ENCODE measurements at regions of chr3 and their contacts with region 1.

Region 1: GRCh38 chr3:158570999-158571974 is at the start of gene MLF1:
- DNase-seq: peak; percentile 98
- H3K4me3 ChIP-seq: peak within 1 kb of the TSS; percentile 83 to 90
- H3K27ac ChIP-seq: peak within 1 kb of the TSS; percentile 67 to 87
- H3K4me1 ChIP-seq: peaks cover 3 to 11% of the 10 kb centered on the region in 2 experiments; a peak in 2 of 4 replicates
- H3K27me3 ChIP-seq: no peaks in the 10 kb centered on the region
- CTCF ChIP-seq: no peak
- EP300 ChIP-seq: no peak
- RAD21 ChIP-seq: no peak
- polyA plus RNA-seq, gene MLF1: 8.2 and 9.4 TPM in 2 replicates

Region 2: GRCh38 chr3:158644345-158644908 is 73.1 kb after region 1 on chr3 and contains the start of gene GFM1:
- CTCF ChIA-PET with region 1: interaction called, 16 read pairs
- POLR2A ChIA-PET with region 1: interaction called, 7 read pairs
- DNase-seq: peak; percentile 88
- H3K4me3 ChIP-seq: peak within 1 kb of the TSS; percentile 96 to 98
- H3K27ac ChIP-seq: peak within 1 kb of the TSS; percentile 83
- H3K4me1 ChIP-seq: peaks cover 6 to 12% of the 10 kb centered on the region in 2 experiments; a peak in 3 of 4 replicates
- H3K27me3 ChIP-seq: no peaks in the 10 kb centered on the region
- CTCF ChIP-seq: peak; percentile 81
- EP300 ChIP-seq: no peak
- RAD21 ChIP-seq: peak; percentile 56
- polyA plus RNA-seq, gene GFM1: 25.2 and 31.7 TPM in 2 replicates